B cell (primary cell): ENCODE measurements at regions of chr1 and their contacts with region 1.

Region 1: DNA sequence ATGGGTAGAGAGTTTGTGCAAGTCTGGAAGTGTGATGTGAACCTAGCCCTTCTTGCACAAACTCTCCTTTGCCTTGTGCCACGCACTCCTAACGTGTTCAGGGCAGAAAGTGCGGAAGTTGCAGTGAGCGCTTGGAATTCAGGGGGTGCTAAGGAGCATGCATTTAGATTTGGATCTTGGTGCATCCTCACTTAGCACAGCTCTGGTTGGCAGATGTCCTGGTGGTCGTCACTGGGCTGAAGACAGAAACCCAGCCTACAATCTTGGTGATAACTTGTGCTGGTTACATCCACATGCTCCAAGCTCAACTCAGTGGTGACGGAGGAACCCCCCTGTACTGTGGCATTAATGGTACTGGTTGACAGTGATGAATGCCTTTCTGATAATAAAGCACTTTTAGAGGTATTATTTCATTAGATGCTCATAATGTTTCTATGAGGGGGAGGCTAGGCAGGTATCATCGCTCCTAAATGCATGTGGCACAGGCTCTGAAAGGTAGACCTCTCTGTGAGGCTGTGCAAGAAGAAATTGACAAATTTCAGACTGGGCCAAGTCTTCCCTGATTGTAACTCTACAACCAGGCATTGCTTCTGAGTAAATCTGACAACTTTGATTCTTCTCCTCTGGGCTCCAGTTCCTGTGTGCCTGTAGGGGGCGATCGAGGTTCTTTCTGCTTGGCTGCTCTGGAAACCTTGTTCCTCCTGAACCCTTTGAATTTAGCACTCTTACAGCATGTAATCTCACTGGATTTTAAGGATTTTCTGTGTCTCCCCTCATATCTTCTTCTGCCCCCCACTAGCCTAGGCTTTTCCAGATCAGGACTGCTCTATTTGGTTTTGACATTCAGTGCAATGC is 40.6 kb downstream of the MAPKAPK2 start:
- DNase-seq: peak; percentile 68
- ATAC-seq: peak; percentile 46
- H3K4me3 ChIP-seq: no peak overlapping the region
- H3K4me3 Mint-ChIP-seq: peak overlapping the region; percentile 18
- H3K27ac ChIP-seq: no peak overlapping the region
- H3K27ac Mint-ChIP-seq: peak overlapping the region; percentile 65
- H3K4me1 ChIP-seq: peaks cover 32 to 33% of the 10 kb centered on the region in 2 donors
- H3K4me1 Mint-ChIP-seq: peaks cover 60% of the 10 kb centered on the region
- H3K27me3 ChIP-seq: no peaks in the 10 kb centered on the region
- H3K27me3 Mint-ChIP-seq: no peaks in the 10 kb centered on the region
- CTCF ChIP-seq: peak; percentile 28

Region 2: GRCh38 chr1:206612129-206612876 is 113.0 kb before region 1 on chr1 and contains the start of gene EIF2D:
- CTCF ChIA-PET with region 1: interaction called, 11 read pairs
- POLR2A ChIA-PET with region 1: no interaction called
- intact Hi-C with region 1: no loop called
- DNase-seq: peak; percentile 96
- ATAC-seq: peak; percentile 100
- H3K4me3 ChIP-seq: peak within 1 kb of the TSS; percentile 61 to 87 (median 86)
- H3K4me3 Mint-ChIP-seq: peak within 1 kb of the TSS; percentile 93
- H3K27ac ChIP-seq: peak within 1 kb of the TSS; percentile 70 to 93
- H3K27ac Mint-ChIP-seq: peak within 1 kb of the TSS; percentile 96
- H3K4me1 ChIP-seq: peaks cover 8 to 12% of the 10 kb centered on the region in 2 donors
- H3K4me1 Mint-ChIP-seq: peaks cover 19% of the 10 kb centered on the region
- H3K27me3 ChIP-seq: no peaks in the 10 kb centered on the region
- H3K27me3 Mint-ChIP-seq: no peaks in the 10 kb centered on the region
- CTCF ChIP-seq: peak; percentile 88
- total RNA-seq, gene EIF2D: 60.6 and 62.2 TPM in 2 replicates

Region 3: DNA sequence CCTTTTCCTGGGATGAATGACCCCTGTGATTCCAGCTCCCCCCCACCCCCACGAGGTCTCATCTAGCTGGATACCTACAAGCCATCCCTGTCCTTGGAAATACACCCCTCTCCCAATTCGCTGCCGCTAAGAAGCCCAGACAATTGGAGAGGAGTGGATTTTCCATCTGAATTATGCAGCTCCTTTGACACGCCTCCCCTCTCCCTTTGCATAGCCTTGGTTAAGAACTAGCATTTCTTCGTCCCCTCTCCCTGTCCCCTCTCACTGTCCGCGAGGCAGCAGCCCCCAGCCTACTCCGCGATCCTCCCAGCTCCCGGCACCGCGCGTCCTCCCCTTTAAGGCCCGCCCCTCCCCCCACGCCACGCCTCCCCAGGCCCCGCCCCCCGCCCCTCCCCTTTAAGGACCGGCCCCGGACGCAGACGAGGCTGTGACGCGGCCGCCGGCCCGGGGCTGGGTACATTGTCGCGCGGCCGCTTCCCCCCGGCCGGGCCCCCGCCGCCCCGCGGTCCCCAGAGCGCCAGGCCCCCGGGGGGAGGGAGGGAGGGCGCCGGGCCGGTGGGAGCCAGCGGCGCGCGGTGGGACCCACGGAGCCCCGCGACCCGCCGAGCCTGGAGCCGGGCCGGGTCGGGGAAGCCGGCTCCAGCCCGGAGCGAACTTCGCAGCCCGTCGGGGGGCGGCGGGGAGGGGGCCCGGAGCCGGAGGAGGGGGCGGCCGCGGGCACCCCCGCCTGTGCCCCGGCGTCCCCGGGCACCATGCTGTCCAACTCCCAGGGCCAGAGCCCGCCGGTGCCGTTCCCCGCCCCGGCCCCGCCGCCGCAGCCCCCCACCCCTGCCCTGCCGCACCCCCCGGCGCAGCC is 40.6 kb before region 1 on chr1 and contains the start of gene MAPKAPK2:
- CTCF ChIA-PET with region 1: interaction called, 19 read pairs
- POLR2A ChIA-PET with region 1: interaction called, 4 read pairs
- intact Hi-C with region 1: loop called (anchors 2 kb)
- DNase-seq: peak; percentile 83
- ATAC-seq: peak; percentile 70
- H3K4me3 ChIP-seq: peak within 1 kb of the TSS; percentile 69 to 91 (median 87)
- H3K4me3 Mint-ChIP-seq: peak within 1 kb of the TSS; percentile 100
- H3K27ac ChIP-seq: peak within 1 kb of the TSS; percentile 76 to 86
- H3K27ac Mint-ChIP-seq: peak within 1 kb of the TSS; percentile 96
- H3K4me1 ChIP-seq: peaks cover 54 to 72% of the 10 kb centered on the region in 2 donors
- H3K4me1 Mint-ChIP-seq: peaks cover 82% of the 10 kb centered on the region
- H3K27me3 ChIP-seq: no peaks in the 10 kb centered on the region
- H3K27me3 Mint-ChIP-seq: no peaks in the 10 kb centered on the region
- CTCF ChIP-seq: no peak
- total RNA-seq, gene MAPKAPK2: 85.8 and 91.1 TPM in 2 replicates

Region 4: GRCh38 chr1:206706298-206706791 is 19.0 kb before region 1 on chr1:
- CTCF ChIA-PET with region 1: interaction called, 46 read pairs
- POLR2A ChIA-PET with region 1: no interaction called
- intact Hi-C with region 1: no loop called
- DNase-seq: no peak
- ATAC-seq: no peak
- H3K4me3 ChIP-seq: no peak overlapping the region
- H3K4me3 Mint-ChIP-seq: peak overlapping the region; percentile 29
- H3K27ac ChIP-seq: no peak overlapping the region
- H3K27ac Mint-ChIP-seq: peak overlapping the region; percentile 57
- H3K4me1 ChIP-seq: peaks cover 79 to 80% of the 10 kb centered on the region in 2 donors
- H3K4me1 Mint-ChIP-seq: peaks cover 90% of the 10 kb centered on the region
- H3K27me3 ChIP-seq: no peaks in the 10 kb centered on the region
- H3K27me3 Mint-ChIP-seq: no peaks in the 10 kb centered on the region
- CTCF ChIP-seq: no peak

Region 5: DNA sequence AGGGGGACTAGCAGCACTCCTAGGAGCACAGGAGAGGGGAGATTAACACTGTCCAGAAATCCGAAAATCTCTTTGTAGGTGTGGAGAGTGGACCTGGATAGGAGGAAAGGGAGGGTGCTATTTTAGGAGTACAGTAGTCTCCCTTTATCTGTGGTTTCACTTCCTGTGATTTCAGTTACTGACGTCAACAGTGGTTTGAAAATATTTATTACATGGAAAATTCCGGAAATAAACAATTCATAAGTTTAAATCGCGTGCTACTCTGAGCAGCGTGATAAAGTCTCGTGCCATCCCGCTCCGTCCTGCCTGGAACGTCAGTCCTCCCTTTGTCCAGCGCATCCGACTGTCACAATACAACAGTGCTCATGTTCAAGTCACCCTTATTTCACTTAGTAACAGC is 165.4 kb after region 1 on chr1:
- CTCF ChIA-PET with region 1: no interaction called
- POLR2A ChIA-PET with region 1: no interaction called
- intact Hi-C with region 1: no loop called
- DNase-seq: no peak
- ATAC-seq: no peak
- H3K4me3 ChIP-seq: no peak overlapping the region
- H3K4me3 Mint-ChIP-seq: no peak overlapping the region
- H3K27ac ChIP-seq: no peak overlapping the region
- H3K27ac Mint-ChIP-seq: no peak overlapping the region
- H3K4me1 ChIP-seq: peaks cover 0 to 9% of the 10 kb centered on the region in 2 donors
- H3K4me1 Mint-ChIP-seq: peaks cover 14% of the 10 kb centered on the region
- H3K27me3 ChIP-seq: no peaks in the 10 kb centered on the region
- H3K27me3 Mint-ChIP-seq: no peaks in the 10 kb centered on the region
- CTCF ChIP-seq: no peak

Region 6: DNA sequence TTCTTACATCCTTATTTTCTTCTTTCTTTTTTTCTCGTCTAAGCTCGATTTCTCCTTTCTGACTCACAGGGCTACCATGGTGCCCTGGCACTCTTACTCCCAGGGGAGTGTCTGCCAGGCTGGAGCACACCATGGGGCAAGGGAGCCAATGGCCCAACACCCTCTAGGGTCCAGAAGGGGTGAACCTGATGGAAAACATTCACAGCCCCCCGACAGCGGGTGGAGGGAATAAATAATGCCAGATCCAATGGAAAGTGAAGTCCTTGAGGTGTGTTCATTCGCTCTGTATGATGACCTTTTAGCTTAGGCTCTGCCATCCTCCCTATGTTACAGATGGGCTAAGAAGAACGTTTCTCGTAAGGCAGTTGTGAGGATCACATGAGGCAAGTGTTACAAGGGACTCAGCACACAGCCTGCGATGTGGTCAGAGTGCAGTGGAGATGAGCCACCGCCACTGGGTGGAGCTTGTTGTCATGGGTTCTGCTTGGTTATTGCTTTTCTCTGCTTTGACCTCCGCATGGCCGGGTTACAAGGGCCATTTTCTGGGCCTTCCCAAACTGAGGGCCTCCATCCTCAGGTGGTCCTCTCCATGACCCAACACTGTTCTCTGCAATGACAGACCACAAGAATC is 199.9 kb after region 1 on chr1:
- CTCF ChIA-PET with region 1: interaction called, 12 read pairs
- POLR2A ChIA-PET with region 1: no interaction called
- intact Hi-C with region 1: no loop called
- DNase-seq: peak; percentile 84
- ATAC-seq: peak; percentile 53
- H3K4me3 ChIP-seq: peak overlapping the region in 1 of 5 experiments; percentile 17
- H3K4me3 Mint-ChIP-seq: no peak overlapping the region
- H3K27ac ChIP-seq: peak overlapping the region; percentile 88 to 96
- H3K27ac Mint-ChIP-seq: no peak overlapping the region
- H3K4me1 ChIP-seq: peaks cover 82 to 84% of the 10 kb centered on the region in 2 donors
- H3K4me1 Mint-ChIP-seq: peaks cover 37% of the 10 kb centered on the region
- H3K27me3 ChIP-seq: no peaks in the 10 kb centered on the region
- H3K27me3 Mint-ChIP-seq: no peaks in the 10 kb centered on the region
- CTCF ChIP-seq: peak; percentile 19